ENCODE measurements at regions of chr19 and their contacts with region 1.

Region 1: DNA sequence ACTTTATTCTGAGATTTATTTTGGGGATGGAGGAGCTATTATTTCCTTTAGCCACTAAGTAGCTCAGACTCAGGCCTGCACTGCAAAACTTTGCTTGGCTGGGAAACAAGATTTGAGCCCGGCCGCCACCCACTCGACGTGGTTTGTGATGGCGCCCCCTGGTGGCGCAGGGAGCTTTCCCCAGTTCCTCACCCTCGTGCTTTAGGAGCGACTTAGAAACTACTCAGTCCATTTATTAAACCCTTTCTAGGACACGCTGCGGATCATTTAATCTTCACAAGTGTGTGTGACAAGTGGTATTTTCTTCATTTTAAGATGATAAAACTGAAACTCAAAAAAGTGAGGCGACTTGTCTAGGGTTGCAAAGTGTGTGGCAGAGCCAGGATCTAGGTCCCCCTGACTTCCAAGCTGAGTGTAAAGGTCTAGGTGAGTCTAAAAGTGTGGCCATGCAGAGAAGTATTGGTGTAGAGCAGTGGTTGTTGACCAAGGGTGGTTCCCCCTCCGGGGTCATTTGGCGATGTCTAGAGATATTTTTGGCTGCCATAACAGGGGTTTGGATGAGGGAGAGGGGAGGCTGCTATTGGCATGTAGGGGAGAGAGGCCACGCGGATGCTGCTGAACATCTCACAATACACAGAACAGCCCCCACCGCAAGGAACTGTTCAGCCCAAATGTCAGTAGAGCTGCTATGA is 2.2 kb downstream of the CXCL17 start:
- DNase-seq: peak; percentile 85
- ATAC-seq: peak; percentile 70
- H3K4me3 Mint-ChIP-seq: no peak overlapping the region
- H3K27ac Mint-ChIP-seq: no peak overlapping the region
- H3K4me1 Mint-ChIP-seq: peaks cover 19% of the 10 kb centered on the region
- H3K27me3 Mint-ChIP-seq: peaks cover 40% of the 10 kb centered on the region
- CTCF ChIP-seq: peak; percentile 97

Region 2: GRCh38 chr19:42244347-42245220 is 195.9 kb before region 1 on chr19:
- CTCF ChIA-PET with region 1: interaction called, 11 read pairs
- POLR2A ChIA-PET with region 1: no interaction called
- DNase-seq: peak; percentile 95
- ATAC-seq: peak; percentile 19
- H3K4me3 Mint-ChIP-seq: peak overlapping the region; percentile 89
- H3K27ac Mint-ChIP-seq: peak overlapping the region; percentile 97
- H3K4me1 Mint-ChIP-seq: peaks cover 35% of the 10 kb centered on the region
- H3K27me3 Mint-ChIP-seq: no peaks in the 10 kb centered on the region
- CTCF ChIP-seq: no peak

Region 3: GRCh38 chr19:42254989-42255765 is 185.3 kb before region 1 on chr19 and contains the start of gene ERF:
- CTCF ChIA-PET with region 1: no interaction called
- POLR2A ChIA-PET with region 1: no interaction called
- DNase-seq: peak; percentile 88
- ATAC-seq: peak; percentile 58
- H3K4me3 Mint-ChIP-seq: peak within 1 kb of the TSS; percentile 82
- H3K27ac Mint-ChIP-seq: peak within 1 kb of the TSS; percentile 69; the same call in 1 of the 2 replicates
- H3K4me1 Mint-ChIP-seq: peaks cover 29% of the 10 kb centered on the region
- H3K27me3 Mint-ChIP-seq: peaks cover 20% of the 10 kb centered on the region
- CTCF ChIP-seq: no peak
- total RNA-seq, gene ERF: 65.4 to 67.6 TPM (median 65.9 TPM) in 3 replicates

Region 4: GRCh38 chr19:42285541-42285941 is 155.0 kb before region 1 on chr19:
- CTCF ChIA-PET with region 1: no interaction called
- POLR2A ChIA-PET with region 1: no interaction called
- DNase-seq: no peak
- ATAC-seq: no peak
- H3K4me3 Mint-ChIP-seq: peak overlapping the region; percentile 89
- H3K27ac Mint-ChIP-seq: no peak overlapping the region
- H3K4me1 Mint-ChIP-seq: peaks cover 26% of the 10 kb centered on the region
- H3K27me3 Mint-ChIP-seq: no peaks in the 10 kb centered on the region
- CTCF ChIP-seq: no peak

Region 5: DNA sequence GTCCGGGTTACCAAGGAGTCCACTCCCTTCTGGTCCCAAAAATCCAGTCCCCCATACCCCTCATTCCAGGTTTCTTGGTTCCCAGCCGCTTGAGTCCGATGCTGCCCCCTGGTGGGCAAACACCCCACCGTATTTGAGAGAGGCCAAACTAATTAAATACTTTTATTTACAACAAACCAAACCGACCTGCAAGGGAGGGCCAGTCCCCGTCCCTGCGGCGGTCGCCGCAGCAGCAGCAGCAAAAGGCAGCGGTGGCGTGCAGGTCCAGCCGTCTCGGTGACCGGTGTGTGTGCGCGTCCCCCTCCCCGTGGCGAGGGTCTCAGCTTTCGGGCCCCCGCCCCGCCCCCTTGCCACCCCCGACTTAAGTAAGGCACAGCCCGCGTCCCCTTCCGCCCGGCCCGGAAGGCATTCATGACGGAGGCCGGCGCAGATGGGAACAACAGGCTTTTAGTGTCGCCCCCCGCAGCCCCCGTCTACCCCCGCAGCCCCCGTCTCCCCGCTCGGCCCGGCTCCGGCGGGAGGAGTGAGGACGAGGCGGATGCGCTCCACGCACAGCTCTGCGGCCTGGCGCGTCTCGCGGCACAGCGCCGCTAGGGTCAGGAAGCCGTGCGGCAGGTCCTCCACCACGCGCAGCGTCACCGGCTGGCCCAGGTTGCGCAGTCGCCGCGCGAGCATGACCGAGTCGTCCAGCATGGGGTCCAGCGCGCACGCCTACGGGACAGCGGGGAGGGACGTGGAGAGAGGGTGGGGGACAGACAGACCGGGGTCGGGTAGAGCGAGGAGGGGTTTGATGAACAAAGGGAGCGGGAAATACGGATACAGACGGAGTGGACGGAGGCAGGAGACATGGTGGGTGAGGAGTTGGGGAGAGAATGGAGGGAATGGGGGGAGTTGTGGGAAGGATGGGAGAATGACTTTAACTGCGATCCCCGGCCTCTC is 38.9 kb before region 1 on chr19:
- CTCF ChIA-PET with region 1: interaction called, 24 read pairs
- POLR2A ChIA-PET with region 1: interaction called, 6 read pairs
- DNase-seq: peak; percentile 89
- ATAC-seq: peak; percentile 26
- H3K4me3 Mint-ChIP-seq: peak overlapping the region; percentile 77
- H3K27ac Mint-ChIP-seq: peak overlapping the region; percentile 85
- H3K4me1 Mint-ChIP-seq: peaks cover 26% of the 10 kb centered on the region
- H3K27me3 Mint-ChIP-seq: peaks cover 46% of the 10 kb centered on the region
- CTCF ChIP-seq: peak; percentile 82

Region 6: GRCh38 chr19:42455621-42456081 is 15.1 kb after region 1 on chr19:
- CTCF ChIA-PET with region 1: interaction called, 44 read pairs
- POLR2A ChIA-PET with region 1: no interaction called
- DNase-seq: no peak
- ATAC-seq: no peak
- H3K4me3 Mint-ChIP-seq: no peak overlapping the region
- H3K27ac Mint-ChIP-seq: no peak overlapping the region
- H3K4me1 Mint-ChIP-seq: peaks cover 48% of the 10 kb centered on the region
- H3K27me3 Mint-ChIP-seq: no peaks in the 10 kb centered on the region; the same call in 1 of the 2 replicates
- CTCF ChIP-seq: no peak

Region 7: DNA sequence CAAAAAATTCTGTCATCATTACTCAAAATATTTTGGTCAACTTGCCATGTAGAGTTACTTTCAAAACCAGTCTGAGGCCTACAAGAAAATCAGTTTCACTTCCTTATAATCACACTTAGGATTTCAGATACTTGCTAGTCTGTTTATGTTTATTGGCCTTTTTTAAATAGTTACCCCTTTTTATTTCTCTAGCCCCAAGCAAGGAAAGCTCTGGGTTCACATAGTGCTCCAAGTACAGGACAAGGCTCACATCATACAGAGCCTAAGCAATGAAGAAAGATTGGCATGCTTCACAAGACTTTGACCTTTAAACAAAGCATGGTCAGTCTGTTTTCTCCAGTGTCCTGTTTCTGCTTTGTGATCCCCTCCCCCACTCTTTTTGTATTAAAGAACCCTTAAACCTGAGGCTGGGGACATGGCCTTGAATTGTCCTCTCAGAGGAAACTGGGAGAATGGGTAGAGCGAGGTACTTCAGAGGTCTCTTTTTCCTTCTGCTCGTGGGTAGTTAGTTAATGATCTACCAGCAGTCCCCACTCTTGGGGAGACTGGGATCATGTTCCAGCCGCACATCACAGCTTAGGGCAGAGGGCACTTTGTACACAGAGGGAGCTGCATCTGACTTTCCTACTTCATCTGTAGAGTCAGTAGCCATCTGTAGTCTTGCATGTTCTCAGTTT is 57.1 kb after region 1 on chr19:
- CTCF ChIA-PET with region 1: interaction called, 16 read pairs
- POLR2A ChIA-PET with region 1: no interaction called
- DNase-seq: no peak
- ATAC-seq: no peak
- H3K4me3 Mint-ChIP-seq: no peak overlapping the region
- H3K27ac Mint-ChIP-seq: no peak overlapping the region
- H3K4me1 Mint-ChIP-seq: peaks cover 35% of the 10 kb centered on the region
- H3K27me3 Mint-ChIP-seq: peaks cover 7% of the 10 kb centered on the region; the same call in 1 of the 2 replicates
- CTCF ChIP-seq: no peak

Region 8: GRCh38 chr19:42563352-42564210 is 123.1 kb after region 1 on chr19:
- CTCF ChIA-PET with region 1: interaction called, 39 read pairs
- POLR2A ChIA-PET with region 1: no interaction called
- DNase-seq: peak; percentile 56
- ATAC-seq: peak; percentile 92
- H3K4me3 Mint-ChIP-seq: no peak overlapping the region
- H3K27ac Mint-ChIP-seq: no peak overlapping the region
- H3K4me1 Mint-ChIP-seq: peaks cover 14% of the 10 kb centered on the region
- H3K27me3 Mint-ChIP-seq: peaks cover 24% of the 10 kb centered on the region
- CTCF ChIP-seq: peak; percentile 73

Region 9: DNA sequence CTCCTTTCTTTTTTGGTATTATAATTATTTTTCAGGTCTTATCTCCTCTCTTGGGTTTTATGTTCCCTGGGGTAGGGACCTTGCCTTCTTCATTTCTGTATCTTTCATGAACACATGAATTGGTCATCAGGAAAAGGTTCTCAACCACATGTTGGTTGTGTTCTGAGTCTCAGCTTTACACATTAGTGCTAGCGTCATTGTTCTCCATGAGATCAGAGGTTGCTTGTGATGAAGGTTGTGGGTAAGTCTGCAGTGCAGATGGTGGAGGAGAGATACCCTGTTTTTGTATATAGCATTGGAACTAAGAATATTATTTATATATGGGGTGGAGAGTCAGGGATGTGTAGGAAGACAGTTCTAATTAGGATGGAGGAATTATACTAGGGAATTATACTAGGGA is 178.8 kb after region 1 on chr19:
- CTCF ChIA-PET with region 1: no interaction called
- POLR2A ChIA-PET with region 1: no interaction called
- DNase-seq: no peak
- ATAC-seq: no peak
- H3K4me3 Mint-ChIP-seq: no peak overlapping the region
- H3K27ac Mint-ChIP-seq: no peak overlapping the region
- H3K4me1 Mint-ChIP-seq: no peaks in the 10 kb centered on the region
- H3K27me3 Mint-ChIP-seq: peaks cover 9% of the 10 kb centered on the region
- CTCF ChIP-seq: no peak